Activated naive CD4-positive, alpha-beta T cell treated with anti-CD3 and anti-CD28 coated beads, Interleukin-2, amount 10 ng/mL, durations not matched to agents 7 days and 5 days (primary cell): ENCODE measurements at regions of chr3 and their contacts with region 1.

Region 1: DNA sequence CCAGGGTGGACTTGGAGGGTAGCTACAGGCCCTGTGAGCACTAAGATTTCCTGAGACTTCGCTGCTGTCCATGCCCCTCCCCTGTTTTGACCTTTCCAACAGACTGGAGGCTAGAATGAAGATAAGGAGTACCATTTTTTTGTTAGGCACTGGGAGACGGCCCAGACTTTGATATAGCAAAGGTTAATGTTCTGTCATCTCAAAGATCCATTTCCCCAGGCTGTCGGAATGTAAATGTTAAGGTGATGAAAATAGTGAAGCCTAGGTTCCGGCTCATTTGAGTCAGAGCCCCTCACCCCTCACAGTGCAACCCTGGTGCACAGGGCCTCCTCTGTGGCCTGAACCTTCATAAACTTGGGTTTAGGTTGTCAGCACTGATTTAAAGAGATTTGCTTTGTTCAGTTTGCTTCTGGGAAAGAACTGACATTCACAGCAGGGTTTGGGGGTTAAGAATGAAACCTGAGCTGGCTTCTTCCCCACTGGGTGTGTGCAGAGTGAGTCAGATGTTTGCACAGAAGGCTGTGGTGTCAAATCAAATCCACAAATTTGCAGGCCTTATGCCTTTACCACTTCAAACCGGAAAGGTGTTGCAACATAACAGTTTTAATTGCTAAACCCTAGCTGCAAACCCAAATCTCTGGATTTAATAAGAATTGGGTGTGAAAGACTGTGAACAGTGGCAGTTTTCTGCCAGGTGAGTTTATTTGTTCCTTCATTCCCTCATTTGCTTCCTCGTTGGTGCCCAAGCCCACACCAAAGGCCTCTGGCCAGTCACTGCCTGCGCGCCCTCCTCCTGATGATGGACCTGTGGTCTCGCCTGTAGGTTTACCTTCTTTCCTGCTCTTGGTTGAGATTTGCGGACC is 20.6 kb upstream of the KCTD6 start:
- DNase-seq: peak; percentile 61
- H3K4me3 Mint-ChIP-seq: no peak overlapping the region
- H3K27ac Mint-ChIP-seq: peak overlapping the region; percentile 93
- H3K4me1 Mint-ChIP-seq: peaks cover 52% of the 10 kb centered on the region
- H3K27me3 Mint-ChIP-seq: no peaks in the 10 kb centered on the region

Region 2: GRCh38 chr3:58237238-58237940 is 233.9 kb before region 1 on chr3 and contains the start of gene ABHD6:
- CTCF ChIA-PET with region 1: no interaction called
- DNase-seq: peak; percentile 82
- H3K4me3 Mint-ChIP-seq: peak within 1 kb of the TSS; percentile 87
- H3K27ac Mint-ChIP-seq: peak within 1 kb of the TSS; percentile 78
- H3K4me1 Mint-ChIP-seq: peaks cover 15% of the 10 kb centered on the region
- H3K27me3 Mint-ChIP-seq: peaks cover 54% of the 10 kb centered on the region

Region 3: GRCh38 chr3:58491506-58492402 is 20.5 kb after region 1 on chr3 and contains the start of gene KCTD6:
- CTCF ChIA-PET with region 1: interaction called, 32 read pairs
- DNase-seq: peak; percentile 87
- H3K4me3 Mint-ChIP-seq: peak within 1 kb of the TSS; percentile 82
- H3K27ac Mint-ChIP-seq: peak within 1 kb of the TSS; percentile 73
- H3K4me1 Mint-ChIP-seq: peaks cover 30% of the 10 kb centered on the region
- H3K27me3 Mint-ChIP-seq: peaks cover 44% of the 10 kb centered on the region